ENCODE measurements at regions of chr15 and their contacts with region 1.

Region 1: GRCh38 chr15:101014921-101015841 is 96.0 kb downstream of the LRRK1 start:
- DNase-seq: peak; percentile 17 to 51 (median 32)
- H3K4me3 ChIP-seq: no peak overlapping the region
- H3K4me3 Mint-ChIP-seq: peak overlapping the region in 1 of 2 donors; percentile 21
- H3K27ac ChIP-seq: no peak overlapping the region
- H3K27ac Mint-ChIP-seq: no peak overlapping the region
- H3K4me1 ChIP-seq: peaks cover 19 to 20% of the 10 kb centered on the region in 2 donors
- H3K4me1 Mint-ChIP-seq: peaks cover 21% of the 10 kb centered on the region
- H3K27me3 ChIP-seq: peaks cover 0 to 14% of the 10 kb centered on the region in 2 donors
- H3K27me3 Mint-ChIP-seq: peaks cover 7 to 22% (median 14%) of the 10 kb centered on the region in 3 donors
- CTCF ChIP-seq: peak; percentile 94

Region 2: DNA sequence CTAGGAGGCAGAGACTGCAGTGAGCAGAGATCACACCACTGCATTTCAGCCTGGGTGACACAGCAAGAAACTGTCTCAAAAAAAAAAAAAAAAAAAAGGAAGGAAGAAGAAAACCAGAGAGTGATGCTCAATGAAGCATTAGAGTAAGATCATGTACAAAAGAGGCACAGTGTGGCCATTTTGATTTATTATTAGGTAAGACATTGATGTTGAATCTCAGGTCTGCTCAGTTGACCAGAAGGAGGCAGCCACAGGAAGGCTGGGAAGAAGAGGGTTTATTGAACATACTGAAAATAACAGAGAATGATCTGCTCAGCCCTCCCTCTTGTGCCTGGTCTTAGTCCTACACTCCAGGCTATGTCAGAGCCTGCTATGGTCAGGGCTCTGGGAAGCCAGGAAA is 80.5 kb before region 1 on chr15:
- intact Hi-C with region 1: no loop called
- DNase-seq: peak; percentile 40 to 63 (median 43)
- H3K4me3 ChIP-seq: no peak overlapping the region
- H3K4me3 Mint-ChIP-seq: no peak overlapping the region
- H3K27ac ChIP-seq: peak overlapping the region; percentile 38 to 75
- H3K27ac Mint-ChIP-seq: peak overlapping the region; percentile 80 to 93 (median 86)
- H3K4me1 ChIP-seq: peaks cover 34 to 38% of the 10 kb centered on the region in 2 donors
- H3K4me1 Mint-ChIP-seq: peaks cover 34% of the 10 kb centered on the region
- H3K27me3 ChIP-seq: no peaks in the 10 kb centered on the region
- H3K27me3 Mint-ChIP-seq: peaks cover 0 to 1% (median 0%) of the 10 kb centered on the region in 3 donors
- CTCF ChIP-seq: peak; percentile 19

Region 3: DNA sequence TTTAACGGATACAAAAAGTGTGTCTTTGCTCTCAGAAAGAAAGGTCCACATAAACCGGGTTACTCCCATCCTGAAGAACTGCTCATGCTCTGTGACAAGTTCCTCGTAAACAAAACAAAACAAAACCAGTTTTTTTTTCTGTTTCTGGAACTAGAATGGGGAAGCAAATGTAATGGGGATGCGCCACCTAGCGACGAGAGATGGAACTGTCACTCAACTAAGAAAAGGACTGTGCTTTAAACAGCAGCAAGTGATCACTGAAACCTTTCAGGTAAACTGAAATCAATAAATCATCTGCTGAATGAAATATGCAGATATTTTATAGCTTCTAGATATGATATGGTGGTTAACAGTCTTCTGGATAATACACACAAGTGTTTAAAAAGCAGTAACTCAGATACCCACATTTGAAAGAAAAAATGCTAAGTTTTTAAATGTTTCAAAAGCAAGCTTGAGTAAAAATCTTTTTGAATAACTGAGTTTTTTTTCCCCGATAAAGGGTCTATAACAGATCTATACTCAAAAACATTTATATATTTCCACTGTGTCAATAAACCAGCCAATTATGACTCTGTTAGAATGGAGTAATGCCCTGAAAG is 626.1 kb after region 1 on chr15:
- intact Hi-C with region 1: loop called in 1 of 2 experiments (anchors 10 kb)
- DNase-seq: peak; percentile 86 to 88 (median 87)
- H3K4me3 ChIP-seq: peak overlapping the region in 2 of 3 experiments; percentile 25 to 60
- H3K4me3 Mint-ChIP-seq: peak overlapping the region; percentile 51 to 78
- H3K27ac ChIP-seq: peak overlapping the region; percentile 7 to 94
- H3K27ac Mint-ChIP-seq: peak overlapping the region; percentile 99 to 100 (median 99)
- H3K4me1 ChIP-seq: peaks cover 21 to 29% of the 10 kb centered on the region in 2 donors
- H3K4me1 Mint-ChIP-seq: peaks cover 27% of the 10 kb centered on the region
- H3K27me3 ChIP-seq: no peaks in the 10 kb centered on the region
- H3K27me3 Mint-ChIP-seq: no peaks in the 10 kb centered on the region
- CTCF ChIP-seq: peak; percentile 94

Measured in CD14-positive monocyte (primary cell).